Esophagus muscularis mucosa (tissue), 4 donors: ENCODE measurements at regions of chr3 and their contacts with region 1.

Region 1: DNA sequence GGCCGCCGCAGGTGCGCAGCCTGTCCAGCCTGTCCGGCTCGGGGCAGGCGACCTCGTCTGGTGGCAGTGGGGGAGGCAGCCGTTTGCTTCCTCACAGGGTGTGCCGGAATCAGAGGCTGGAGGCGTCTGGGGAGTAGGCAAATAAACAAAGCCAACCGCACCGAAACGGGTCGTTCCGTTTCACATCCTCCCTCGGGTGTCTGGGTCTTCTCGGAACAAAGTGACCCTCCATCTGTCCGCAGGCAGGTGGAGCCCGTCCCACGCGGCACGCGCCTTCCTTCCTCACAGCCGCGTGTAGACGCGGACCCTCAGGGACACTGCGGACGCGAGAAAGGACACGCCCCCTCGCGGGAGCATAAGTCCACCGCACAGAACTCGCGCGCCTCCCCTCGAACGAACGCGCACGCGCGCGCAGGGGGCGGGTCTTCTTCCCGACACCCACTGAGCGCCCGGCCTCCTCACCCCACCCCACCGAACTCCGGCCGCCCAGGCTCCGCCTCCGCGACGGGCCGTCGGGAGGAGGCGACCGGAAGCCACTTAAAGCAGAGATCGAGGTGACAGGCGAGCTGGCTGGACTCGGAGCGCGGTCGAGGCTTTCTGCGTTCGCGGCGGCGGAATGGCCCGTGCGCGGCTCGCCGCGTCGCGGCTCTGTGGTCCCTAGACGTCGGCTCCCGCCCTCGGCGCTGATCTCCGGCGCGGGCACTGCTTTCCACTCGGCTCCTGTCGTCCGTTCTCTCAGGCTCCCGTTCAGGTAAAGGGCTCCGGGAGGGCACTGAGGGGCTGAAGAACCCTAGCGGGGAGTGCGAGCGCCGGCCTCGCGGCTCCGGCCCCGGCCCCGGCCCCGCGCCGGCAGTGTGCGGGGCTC is at the start of gene TIPARP:
- DNase-seq: peak; percentile 100
- H3K4me3 ChIP-seq: peak within 1 kb of the TSS; percentile 79 to 96 (median 86)
- H3K27ac ChIP-seq: peak within 1 kb of the TSS; percentile 92 to 98 (median 96)
- H3K4me1 ChIP-seq: peaks cover 7 to 41% (median 32%) of the 10 kb centered on the region in 4 donors
- H3K27me3 ChIP-seq: no peaks in the 10 kb centered on the region
- CTCF ChIP-seq: peak; percentile 60 to 80 (median 63)
- EP300 ChIP-seq: peak; percentile 61
- POLR2A ChIP-seq: peak; percentile 96
- total RNA-seq, gene TIPARP: 61.9 to 94.8 (median 78.5) TPM

Region 2: DNA sequence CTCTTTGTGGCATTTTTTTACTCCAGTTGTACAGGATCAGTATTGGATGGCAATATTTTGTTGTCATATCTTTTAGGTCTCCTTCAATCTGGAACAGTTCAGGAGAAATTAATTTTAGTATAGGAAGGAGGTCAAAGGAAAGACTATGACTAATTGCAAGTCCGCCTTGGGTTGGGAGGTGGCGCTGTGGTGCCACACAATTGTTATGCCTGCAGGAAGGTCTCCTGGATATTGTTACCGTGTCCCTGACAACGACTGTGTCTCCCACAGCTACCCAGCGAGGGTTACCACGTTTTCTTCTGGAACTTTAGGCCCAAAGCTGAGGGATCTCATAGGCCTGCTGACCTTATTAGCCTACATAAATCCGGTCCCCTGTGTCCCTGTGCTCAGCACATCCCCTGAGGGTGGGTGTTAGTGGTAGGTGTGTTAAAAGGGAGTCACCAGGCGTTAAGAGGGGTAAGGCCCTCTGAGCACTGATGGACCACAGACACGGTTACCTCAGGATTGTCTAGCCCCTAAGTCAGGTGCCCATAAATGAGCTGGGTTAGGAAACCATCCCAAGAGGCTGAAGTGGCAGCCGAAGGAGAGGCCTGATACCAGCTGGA is 522.4 kb before region 1 on chr3:
- intact Hi-C with region 1: loop called (anchors 2 kb)
- DNase-seq: peak; percentile 91
- H3K4me3 ChIP-seq: no peak overlapping the region
- H3K27ac ChIP-seq: peak overlapping the region in 1 of 4 donors; percentile 65
- H3K4me1 ChIP-seq: peaks cover 22 to 46% (median 40%) of the 10 kb centered on the region in 4 donors
- H3K27me3 ChIP-seq: no peaks in the 10 kb centered on the region
- CTCF ChIP-seq: peak; percentile 68 to 81 (median 79)
- EP300 ChIP-seq: no peak
- POLR2A ChIP-seq: no peak

Region 3: DNA sequence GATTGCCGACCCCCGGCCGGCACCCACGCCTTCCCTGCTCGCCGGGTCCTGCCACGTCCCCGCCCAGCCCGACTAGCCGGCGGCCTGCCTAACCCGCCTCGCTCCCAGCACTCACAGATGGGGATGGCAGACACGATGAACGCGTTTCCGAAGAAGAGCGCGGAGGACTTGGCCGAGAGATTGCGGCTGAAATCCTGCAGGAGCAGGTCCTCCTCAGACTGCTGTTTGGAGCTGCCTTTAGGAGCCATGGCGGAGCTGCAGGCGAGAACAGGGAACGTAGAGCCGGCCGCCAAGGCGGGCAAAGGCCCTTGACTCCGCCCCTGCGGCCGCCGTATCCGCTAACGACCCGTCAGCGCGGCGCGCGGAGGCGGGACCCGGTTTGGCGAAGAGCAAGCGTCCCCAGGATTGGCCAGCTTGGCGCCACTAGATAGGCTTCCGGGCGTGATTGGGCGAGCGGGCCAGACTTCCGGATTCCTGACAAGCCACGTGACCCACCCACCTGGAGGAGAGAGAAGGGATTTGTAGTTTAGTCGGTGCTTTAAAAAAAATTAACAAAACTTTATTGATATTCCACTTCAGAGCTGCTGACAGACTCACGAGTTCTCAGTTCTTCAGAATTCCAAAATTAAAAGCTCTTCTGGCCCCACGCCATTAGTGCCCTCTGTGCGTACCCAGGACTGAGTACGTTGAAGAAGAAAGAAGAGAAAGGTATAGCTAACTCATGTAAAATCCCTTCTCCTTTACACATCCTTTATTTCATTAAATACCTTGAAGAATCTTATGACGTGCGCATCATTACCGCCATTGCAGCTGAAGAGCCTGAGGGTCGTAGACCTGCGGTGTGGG is 119.2 kb before region 1 on chr3 and contains the start of gene SSR3:
- intact Hi-C with region 1: loop called (anchors 5 kb)
- DNase-seq: peak; percentile 100
- H3K4me3 ChIP-seq: peak within 1 kb of the TSS; percentile 75 to 95 (median 79)
- H3K27ac ChIP-seq: peak within 1 kb of the TSS; percentile 86 to 88 (median 88)
- H3K4me1 ChIP-seq: peaks cover 24 to 46% (median 43%) of the 10 kb centered on the region in 4 donors
- H3K27me3 ChIP-seq: no peaks in the 10 kb centered on the region
- CTCF ChIP-seq: peak in 2 of 3 experiments; percentile 35 to 57
- EP300 ChIP-seq: no peak
- POLR2A ChIP-seq: peak; percentile 75
- total RNA-seq, gene SSR3: 170 to 211 (median 207) TPM

Region 4: GRCh38 chr3:156803952-156804741 is 129.9 kb after region 1 on chr3:
- intact Hi-C with region 1: no loop called
- DNase-seq: no peak
- H3K4me3 ChIP-seq: no peak overlapping the region
- H3K27ac ChIP-seq: no peak overlapping the region
- H3K4me1 ChIP-seq: no peaks in the 10 kb centered on the region
- H3K27me3 ChIP-seq: no peaks in the 10 kb centered on the region
- CTCF ChIP-seq: no peak
- EP300 ChIP-seq: no peak
- POLR2A ChIP-seq: no peak

Region 5: GRCh38 chr3:156816800-156817645 is 142.7 kb after region 1 on chr3:
- intact Hi-C with region 1: loop called (anchors 2 kb)
- DNase-seq: no peak
- H3K4me3 ChIP-seq: peak overlapping the region; percentile 59 to 73 (median 72)
- H3K27ac ChIP-seq: peak overlapping the region; percentile 79 to 85 (median 80)
- H3K4me1 ChIP-seq: peaks cover 6 to 20% (median 18%) of the 10 kb centered on the region in 4 donors
- H3K27me3 ChIP-seq: no peaks in the 10 kb centered on the region
- CTCF ChIP-seq: peak in 1 of 3 experiments; percentile 22
- EP300 ChIP-seq: peak; percentile 88
- POLR2A ChIP-seq: no peak

Region 6: GRCh38 chr3:157081681-157082210 is 407.5 kb after region 1 on chr3:
- intact Hi-C with region 1: loop called (anchors 5 kb)
- DNase-seq: peak; percentile 95
- H3K4me3 ChIP-seq: peak overlapping the region in 1 of 4 donors; percentile 4
- H3K27ac ChIP-seq: peak overlapping the region in 3 of 4 donors; percentile 8 to 42 (median 36)
- H3K4me1 ChIP-seq: peaks cover 8 to 29% (median 24%) of the 10 kb centered on the region in 4 donors
- H3K27me3 ChIP-seq: no peaks in the 10 kb centered on the region
- CTCF ChIP-seq: peak in 2 of 3 experiments; percentile 96 to 97
- EP300 ChIP-seq: no peak
- POLR2A ChIP-seq: no peak

Region 7: DNA sequence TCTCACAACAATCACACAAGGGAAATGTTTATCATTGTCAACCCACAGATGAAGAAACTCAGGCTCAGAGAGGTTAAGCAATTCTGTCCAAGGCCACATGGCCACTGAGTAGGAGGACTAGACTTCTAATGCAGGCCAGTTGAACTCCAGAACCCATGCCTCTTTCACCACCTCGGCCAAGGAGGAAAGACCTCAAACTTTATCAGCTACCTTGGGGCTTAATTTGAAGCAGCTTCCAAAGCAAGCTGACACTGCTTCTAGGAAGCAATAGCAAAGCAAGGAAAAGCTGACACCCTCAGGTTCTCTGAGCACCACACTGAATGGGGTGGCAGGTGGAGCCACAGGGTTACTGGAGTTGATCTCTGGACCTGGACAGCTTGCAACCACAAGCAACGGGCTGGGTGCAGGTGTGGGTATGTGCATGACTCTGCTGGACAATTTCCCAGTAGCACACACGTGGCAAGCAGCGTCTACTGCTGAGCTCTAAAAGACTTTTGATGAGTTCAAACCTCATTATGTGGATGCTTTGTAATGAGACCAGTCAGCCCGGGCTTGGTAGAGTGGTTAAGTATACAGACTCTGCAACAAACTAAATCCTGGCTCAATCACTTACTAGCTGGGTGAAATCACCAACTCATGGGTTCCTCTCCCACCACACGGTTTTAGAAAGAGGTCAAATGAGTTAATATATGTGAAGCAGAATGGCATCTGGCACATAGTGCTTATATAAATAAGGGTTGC is 462.5 kb after region 1 on chr3:
- intact Hi-C with region 1: loop called (anchors 5 kb)
- DNase-seq: no peak
- H3K4me3 ChIP-seq: no peak overlapping the region
- H3K27ac ChIP-seq: peak overlapping the region; percentile 21 to 67 (median 41)
- H3K4me1 ChIP-seq: peaks cover 34 to 48% (median 38%) of the 10 kb centered on the region in 4 donors
- H3K27me3 ChIP-seq: no peaks in the 10 kb centered on the region
- CTCF ChIP-seq: no peak
- EP300 ChIP-seq: no peak
- POLR2A ChIP-seq: no peak